GM13976 (cell line): ENCODE measurements at regions of chrX and their contacts with region 1.

Region 1: DNA sequence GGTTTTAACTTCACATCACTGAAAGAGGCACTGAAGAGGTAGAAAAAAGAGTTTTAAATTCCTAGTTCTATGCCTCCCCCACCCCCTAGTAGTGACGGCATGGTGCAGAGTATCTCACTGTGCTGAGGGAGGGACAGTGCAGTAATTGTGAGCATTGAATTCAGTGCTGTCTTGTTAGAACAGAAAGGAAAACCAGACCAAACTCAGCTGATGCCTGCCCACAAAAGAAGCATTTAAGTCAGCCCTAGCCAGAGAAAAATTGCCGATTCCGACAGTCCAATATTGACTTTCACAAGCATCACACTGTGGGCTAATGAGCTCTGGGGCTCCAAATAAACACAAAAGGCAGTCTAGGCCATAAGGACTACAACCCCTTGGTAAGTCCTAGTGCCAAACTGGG is 417.7 kb downstream of the AR start:
- DNase-seq: no peak
- CTCF ChIP-seq: no peak

Region 2: GRCh38 chrX:67872958-67873357 is 88.6 kb before region 1 on chrX:
- in situ Hi-C with region 1: loop called (anchors 25 kb)
- DNase-seq: no peak
- CTCF ChIP-seq: no peak